ENCODE measurements at regions of chr1 and their contacts with region 1.

Region 1: DNA sequence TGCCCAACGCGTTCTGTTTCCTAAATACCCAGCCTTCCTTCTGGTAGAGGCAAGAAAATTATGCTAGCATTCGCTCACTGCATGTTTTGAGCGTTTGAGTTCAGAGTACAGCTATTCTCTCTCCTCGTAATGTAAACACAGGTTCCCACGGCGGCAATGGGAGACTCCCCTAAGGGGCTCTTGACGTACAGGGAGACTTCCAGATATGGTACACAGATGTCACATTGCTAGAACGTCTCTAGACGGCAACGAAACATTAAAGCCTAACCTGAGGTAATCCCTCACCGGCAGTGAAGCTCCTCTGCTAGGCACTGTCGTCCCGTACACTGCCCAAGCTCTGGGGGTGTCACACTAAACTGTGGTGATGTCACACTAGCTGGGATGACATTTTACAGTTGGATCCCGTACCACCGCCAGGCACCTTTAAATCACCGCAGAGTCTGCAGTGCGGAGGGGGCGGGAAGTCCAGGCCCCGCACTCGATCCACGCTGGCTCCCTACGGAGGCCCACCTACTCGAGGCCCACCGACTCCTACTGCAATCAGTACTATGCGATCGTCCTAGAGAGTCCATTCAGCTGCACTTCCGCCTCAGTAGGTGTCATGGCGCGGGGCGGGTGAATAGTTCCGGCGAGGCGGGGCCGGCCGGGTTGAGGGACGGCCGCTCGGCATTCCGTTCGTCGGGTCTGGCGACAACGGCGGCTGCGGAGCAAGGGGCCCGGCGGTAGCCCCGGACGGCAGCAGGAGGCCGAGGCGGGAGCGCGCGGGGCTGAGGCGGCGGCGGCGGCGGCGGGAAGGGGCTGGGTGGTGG is at the start of gene HIPK1:
- DNase-seq: peak; percentile 93
- ATAC-seq: peak; percentile 73
- H3K4me3 Mint-ChIP-seq: peak within 1 kb of the TSS; percentile 99
- H3K27ac Mint-ChIP-seq: peak within 1 kb of the TSS; percentile 99
- H3K4me1 Mint-ChIP-seq: peaks cover 50% of the 10 kb centered on the region
- H3K27me3 Mint-ChIP-seq: no peaks in the 10 kb centered on the region
- CTCF ChIP-seq: no peak
- total RNA-seq, gene HIPK1: 38.0 and 39.0 TPM in 2 replicates

Region 2: DNA sequence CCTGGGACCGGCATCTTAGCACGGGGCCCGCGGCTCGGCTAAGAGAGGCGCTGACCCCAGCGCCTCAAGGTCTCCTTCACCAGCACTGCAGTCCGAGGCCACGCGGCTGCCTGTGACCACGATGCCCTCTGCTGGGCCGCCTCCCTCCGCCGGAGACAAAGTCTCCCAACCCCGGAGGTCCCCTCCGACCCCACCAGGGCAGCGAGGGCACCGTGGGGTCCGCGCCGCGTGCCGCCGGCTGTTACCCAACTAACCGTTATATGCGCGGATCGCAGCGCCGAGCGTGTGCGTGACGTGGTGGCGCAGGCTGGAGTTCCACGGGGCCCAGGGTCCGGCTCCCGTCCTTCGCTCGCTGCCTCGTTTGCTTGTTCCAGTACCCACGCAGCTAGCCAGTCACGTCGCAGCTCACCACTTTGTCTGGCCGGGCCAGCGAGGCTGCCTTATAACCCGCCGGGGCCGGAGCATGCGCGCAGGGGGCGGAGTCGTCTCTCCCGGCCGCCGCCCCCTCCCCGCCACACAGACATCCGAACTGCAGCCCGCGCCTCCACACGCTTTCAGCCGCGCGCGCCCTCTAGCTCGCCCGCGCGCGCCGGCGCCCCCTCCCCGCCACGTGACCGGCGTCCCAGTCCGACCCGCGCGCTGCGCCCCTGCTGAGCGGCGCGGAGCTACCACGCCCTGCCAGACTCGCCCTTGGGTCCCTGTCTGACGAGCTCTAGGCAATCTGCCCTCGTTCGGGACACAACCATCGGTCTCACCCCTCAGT is 973.2 kb before region 1 on chr1 and contains the start of gene SLC16A1:
- CTCF ChIA-PET with region 1: no interaction called
- POLR2A ChIA-PET with region 1: no interaction called
- intact Hi-C with region 1: loop called (anchors 10 kb)
- DNase-seq: peak; percentile 89
- ATAC-seq: peak; percentile 82
- H3K4me3 Mint-ChIP-seq: peak within 1 kb of the TSS; percentile 98
- H3K27ac Mint-ChIP-seq: peak within 1 kb of the TSS; percentile 98
- H3K4me1 Mint-ChIP-seq: peaks cover 49% of the 10 kb centered on the region
- H3K27me3 Mint-ChIP-seq: no peaks in the 10 kb centered on the region
- CTCF ChIP-seq: no peak
- total RNA-seq, gene SLC16A1: 17.8 and 17.9 TPM in 2 replicates

Region 3: DNA sequence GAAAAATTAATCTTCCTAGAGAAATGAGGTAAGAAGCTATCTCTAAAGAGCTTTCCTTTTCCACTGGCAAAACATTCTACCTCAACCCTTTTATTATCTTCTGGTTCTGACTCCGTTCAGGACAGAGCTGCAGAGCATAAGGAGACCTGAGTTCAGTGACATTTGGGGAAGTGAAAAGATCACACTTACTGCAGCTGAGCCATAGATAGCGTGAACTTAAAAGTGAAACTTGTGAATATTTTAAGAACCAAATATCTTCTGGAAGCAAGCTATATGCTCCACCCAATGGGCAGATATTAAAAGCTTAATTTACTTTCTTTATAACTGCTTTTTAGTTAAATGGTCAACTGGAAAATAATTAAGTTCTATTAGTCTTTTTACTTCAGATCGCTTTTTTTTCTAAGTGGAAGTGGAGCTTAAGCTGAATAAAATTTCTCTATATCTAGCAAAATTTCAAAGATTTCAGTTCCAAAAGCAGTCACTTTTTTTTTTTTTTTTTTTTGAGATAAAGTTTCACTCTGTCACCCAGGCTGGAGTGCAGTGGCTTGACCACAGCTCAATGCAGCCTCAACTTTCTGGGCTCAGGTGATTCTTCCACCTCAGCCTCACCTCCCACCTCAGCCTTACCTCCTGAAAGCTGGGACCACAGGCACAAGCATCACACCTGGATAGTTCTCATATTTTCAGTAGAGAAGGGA is 69.5 kb before region 1 on chr1:
- CTCF ChIA-PET with region 1: interaction called, 6 read pairs
- POLR2A ChIA-PET with region 1: interaction called, 27 read pairs
- intact Hi-C with region 1: loop called (anchors 1 kb)
- DNase-seq: no peak
- ATAC-seq: peak; percentile 84
- H3K4me3 Mint-ChIP-seq: peak overlapping the region; percentile 51
- H3K27ac Mint-ChIP-seq: peak overlapping the region; percentile 95
- H3K4me1 Mint-ChIP-seq: peaks cover 66% of the 10 kb centered on the region
- H3K27me3 Mint-ChIP-seq: no peaks in the 10 kb centered on the region
- CTCF ChIP-seq: no peak

Region 4: DNA sequence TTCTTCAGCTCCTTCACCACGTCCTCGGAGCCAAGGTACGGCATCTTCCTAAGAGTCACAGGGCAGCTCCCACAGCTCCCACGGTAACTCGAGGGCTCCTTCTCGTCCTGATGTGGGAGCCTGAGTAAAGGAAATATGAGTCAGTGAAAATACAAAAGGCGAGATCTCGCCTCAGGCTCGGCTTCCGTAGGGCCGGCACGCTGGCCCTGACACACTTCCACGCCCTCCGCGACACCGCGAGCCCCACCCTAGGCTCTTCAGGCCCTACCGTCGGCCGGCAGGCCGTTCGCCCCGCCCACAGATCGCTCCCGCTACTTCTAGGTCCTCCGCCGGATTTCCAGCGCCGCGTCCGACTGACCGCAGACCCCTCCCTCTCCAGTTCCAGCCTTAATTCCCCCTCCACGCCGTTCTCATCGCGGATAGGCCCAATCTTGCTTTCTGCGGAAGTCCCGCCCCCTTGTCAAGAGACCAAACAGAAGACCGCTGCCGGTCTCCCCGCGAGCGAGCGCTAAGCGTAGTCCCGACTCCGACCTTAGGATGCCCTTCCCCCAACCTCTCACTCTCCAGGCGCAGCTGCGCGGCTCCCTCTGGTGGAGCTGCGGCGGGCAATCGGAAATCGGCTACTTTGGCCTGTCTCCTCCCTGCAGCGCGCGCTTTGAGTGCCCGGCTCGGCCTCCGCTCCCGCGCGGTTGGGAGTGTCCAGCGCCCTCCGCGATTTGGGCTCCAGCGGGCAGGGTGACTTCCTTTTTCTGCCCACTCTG is 24.3 kb before region 1 on chr1 and contains the starts of genes AP4B1 and DCLRE1B:
- CTCF ChIA-PET with region 1: interaction called, 43 read pairs
- POLR2A ChIA-PET with region 1: interaction called, 127 read pairs
- intact Hi-C with region 1: loop called (anchors 1 kb)
- DNase-seq: peak; percentile 89
- ATAC-seq: peak; percentile 91
- H3K4me3 Mint-ChIP-seq: peak within 1 kb of the TSS; percentile 94
- H3K27ac Mint-ChIP-seq: peak within 1 kb of the TSS; percentile 95
- H3K4me1 Mint-ChIP-seq: peaks cover 51% of the 10 kb centered on the region
- H3K27me3 Mint-ChIP-seq: no peaks in the 10 kb centered on the region
- CTCF ChIP-seq: no peak
- total RNA-seq, gene AP4B1: 48.5 and 69.9 TPM in 2 replicates
- total RNA-seq, gene DCLRE1B: 5.4 and 6.0 TPM in 2 replicates

Region 5: DNA sequence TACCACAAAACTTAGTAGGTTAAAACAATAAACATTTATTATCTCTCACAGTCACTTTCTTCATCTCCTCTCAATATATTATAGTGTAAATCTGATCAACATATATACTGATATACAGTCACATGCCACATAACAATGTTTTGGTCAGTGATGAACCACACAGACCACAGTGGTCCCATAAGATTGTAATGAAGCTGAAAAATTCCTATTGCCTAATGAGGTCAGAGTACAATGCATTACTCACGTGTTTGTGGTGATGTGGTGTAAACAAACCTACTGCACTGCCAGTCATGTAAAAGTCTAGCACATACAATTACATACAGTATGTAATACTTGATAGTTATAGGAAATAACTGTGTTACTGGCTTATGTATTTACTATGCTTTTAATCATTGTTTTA is 80.2 kb after region 1 on chr1:
- CTCF ChIA-PET with region 1: no interaction called
- POLR2A ChIA-PET with region 1: no interaction called
- intact Hi-C with region 1: no loop called
- DNase-seq: no peak
- ATAC-seq: no peak
- H3K4me3 Mint-ChIP-seq: no peak overlapping the region
- H3K27ac Mint-ChIP-seq: no peak overlapping the region
- H3K4me1 Mint-ChIP-seq: no peaks in the 10 kb centered on the region
- H3K27me3 Mint-ChIP-seq: peaks cover 9% of the 10 kb centered on the region
- CTCF ChIP-seq: no peak

Region 6: DNA sequence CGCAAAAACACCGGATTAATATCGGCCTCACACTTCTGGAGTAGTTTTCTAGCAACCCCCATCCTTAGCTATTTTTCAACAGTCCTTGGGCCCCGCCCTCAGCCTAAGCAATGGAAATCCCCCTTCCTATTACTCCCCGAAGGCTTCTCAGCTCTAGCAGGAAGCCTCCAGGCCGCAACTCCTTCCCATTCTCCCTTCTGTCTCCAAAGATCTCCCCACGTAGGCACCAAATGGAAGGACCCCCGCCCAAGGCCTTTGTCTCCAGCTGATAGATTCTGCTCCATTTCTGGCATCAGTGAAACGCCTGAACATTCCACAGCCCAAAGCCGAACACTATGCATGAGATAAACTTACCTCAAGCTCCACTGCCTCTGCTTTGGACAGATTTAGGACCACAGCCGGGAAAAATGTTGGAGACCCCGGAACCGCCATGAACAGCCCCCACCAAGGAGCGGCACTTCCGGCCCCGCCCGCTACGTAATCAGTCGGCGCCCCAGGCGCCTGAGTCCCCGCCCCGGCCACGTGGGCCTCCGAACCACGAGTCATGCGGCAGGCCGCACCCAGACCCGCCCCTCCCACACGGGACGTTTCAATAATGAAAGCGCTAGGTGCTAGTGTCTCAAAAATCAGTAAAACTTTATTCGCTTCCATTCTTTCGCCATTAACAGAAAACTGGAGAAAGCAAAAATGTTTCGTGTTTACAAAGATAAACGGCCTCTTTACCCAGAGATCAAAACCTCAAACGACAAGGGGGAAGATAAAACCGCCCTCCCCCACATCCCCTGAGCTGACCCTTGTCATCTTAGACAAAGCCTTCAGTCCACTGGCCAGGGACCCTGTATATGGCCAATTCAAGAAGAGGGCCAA is 787.4 kb after region 1 on chr1 and contains the start of gene NRAS:
- CTCF ChIA-PET with region 1: no interaction called
- POLR2A ChIA-PET with region 1: no interaction called
- intact Hi-C with region 1: loop called (anchors 2 kb)
- DNase-seq: peak; percentile 97
- ATAC-seq: peak; percentile 94
- H3K4me3 Mint-ChIP-seq: peak within 1 kb of the TSS; percentile 99
- H3K27ac Mint-ChIP-seq: peak within 1 kb of the TSS; percentile 98
- H3K4me1 Mint-ChIP-seq: peaks cover 28% of the 10 kb centered on the region
- H3K27me3 Mint-ChIP-seq: no peaks in the 10 kb centered on the region
- CTCF ChIP-seq: no peak
- total RNA-seq, gene NRAS: 53.3 and 55.5 TPM in 2 replicates

Measured in activated B cell treated with CpG ODN at 0.5 μM for 24 hours (primary cell).